ENCODE measurements at regions of chr3 and their contacts with region 1.

Region 1: DNA sequence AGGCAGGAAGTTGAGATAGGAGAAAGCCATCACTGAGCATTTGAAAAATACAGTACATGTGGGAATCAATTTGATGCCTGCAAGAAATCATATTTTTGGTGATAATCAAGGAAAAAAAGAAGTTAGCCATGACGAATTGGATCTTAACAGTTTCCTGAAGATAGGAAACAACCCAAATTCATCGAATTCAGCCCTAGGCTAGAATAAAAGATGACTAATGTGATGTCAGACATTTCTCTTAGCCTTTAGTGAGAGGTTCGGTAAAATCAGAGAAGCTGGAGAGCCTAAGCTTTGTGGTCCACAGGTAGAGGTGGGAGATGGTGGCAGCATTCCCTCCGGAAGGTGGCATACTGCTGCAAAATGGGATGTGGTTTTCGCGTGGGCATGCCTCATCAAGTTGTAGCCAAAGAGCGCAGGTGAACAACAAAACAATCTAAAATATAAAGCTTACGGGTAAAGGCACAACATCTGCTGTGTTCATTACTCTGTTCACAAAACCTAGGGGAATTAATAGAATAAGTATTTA is 144.1 kb upstream of the ALCAM start:
- DNase-seq: no peak
- H3K4me3 ChIP-seq: no peak overlapping the region
- H3K27ac ChIP-seq: no peak overlapping the region
- H3K4me1 ChIP-seq: no peaks in the 10 kb centered on the region
- H3K27me3 ChIP-seq: no peaks in the 10 kb centered on the region

Region 2: DNA sequence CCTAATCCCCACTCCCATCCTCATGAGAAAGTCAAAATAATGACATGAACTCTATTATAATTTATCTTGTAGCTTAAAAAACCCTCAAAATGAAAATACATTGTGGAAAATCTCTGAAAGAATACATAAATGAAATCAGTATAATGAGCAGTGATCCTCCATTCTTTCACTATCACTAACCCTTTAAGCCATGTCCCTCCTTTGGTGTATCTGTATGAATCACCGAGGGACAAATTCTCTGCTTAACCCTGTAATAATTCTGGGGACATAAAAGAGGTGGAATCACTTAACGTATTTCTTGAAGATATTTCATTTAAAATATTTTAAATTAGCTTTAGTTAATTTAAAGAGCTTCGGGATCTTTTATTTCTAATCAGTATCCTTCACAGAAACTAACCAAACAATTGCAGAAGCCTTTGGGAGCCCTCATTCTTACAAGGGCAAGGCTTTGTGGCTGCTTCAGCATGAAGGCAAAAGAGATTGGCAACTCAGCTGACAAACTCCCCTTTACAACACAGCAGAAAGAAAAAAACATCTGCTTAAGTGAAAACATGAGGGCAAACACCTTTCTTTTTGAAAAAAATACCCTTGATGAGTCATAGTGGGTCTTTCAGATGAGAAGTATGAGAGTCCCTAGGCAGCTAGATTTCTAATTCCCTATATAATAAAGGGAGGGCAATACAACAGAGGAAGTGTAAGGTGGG is 100.1 kb after region 1 on chr3:
- in situ Hi-C with region 1: loop called (anchors 25 kb)
- DNase-seq: no peak
- H3K4me3 ChIP-seq: no peak overlapping the region
- H3K27ac ChIP-seq: no peak overlapping the region
- H3K4me1 ChIP-seq: no peaks in the 10 kb centered on the region
- H3K27me3 ChIP-seq: no peaks in the 10 kb centered on the region

Measured in GM23248 (cell line).